AG04449 (cell line): ENCODE measurements at regions of chr7 and their contacts with region 1.

Region 1: DNA sequence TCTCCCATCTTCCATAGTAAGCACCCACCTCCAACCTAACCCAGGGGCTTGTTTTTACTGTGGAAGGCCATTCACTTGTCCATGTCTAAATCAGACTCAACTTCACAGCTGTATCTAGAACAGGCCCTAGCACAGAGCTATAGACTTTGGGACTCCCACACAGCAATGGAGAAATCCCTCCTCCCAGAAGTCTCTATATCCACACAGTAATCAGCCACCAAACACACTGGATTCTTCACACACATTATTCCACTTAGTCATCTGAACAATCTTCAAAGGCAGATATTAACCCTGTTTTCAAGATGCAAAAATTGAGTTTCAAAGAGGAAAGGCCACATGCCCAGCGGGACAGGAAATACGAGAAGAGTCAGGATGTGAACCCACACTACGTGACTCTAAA is 81.8 kb downstream of the MALSU1 start:
- DNase-seq: no peak
- H3K4me3 ChIP-seq: no peak overlapping the region
- CTCF ChIP-seq: no peak

Region 2: DNA sequence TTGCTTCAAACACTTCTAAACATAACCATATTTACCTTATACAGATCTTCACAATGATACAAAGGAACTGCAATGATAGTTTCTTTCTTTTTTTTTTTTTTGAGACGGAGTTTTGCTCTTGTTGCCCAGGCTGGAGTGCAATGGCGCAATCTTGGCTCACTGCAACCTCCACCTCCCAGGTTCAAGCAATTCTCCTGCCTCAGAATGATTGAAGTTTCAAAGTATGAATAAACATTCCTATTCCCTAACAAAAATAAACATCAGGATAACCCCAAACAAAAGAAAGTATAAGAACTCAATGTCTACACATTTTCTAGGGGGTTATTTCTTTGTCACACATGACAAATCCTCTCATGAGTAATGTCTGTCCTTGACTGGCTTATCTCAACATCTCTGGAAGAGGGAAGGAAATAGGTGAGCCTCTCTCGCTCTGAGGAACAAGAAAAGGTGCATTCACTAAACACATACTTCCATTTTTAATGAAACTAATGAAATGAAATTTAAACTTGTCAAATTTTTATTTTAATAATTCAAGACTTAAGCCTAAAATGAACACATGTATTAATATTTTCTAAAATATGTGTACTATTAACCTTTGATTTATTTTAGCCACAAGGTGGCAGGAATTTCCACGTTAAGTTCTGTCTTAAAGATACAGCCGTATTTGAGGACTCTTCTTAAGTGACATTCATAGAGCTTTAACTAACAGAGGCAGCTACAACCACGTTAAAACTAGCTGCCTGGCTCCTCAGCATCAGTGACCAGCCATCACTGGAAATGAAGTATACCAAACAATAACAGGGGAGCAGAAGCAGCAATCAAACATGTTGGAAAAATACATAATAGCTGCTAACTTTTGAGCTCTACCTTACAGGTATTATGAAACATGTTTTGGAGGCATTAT is 23.5 kb before region 1 on chr7:
- CTCF ChIA-PET with region 1: interaction called, 10 read pairs
- POLR2A ChIA-PET with region 1: no interaction called
- DNase-seq: no peak
- H3K4me3 ChIP-seq: no peak overlapping the region
- CTCF ChIP-seq: no peak

Region 3: DNA sequence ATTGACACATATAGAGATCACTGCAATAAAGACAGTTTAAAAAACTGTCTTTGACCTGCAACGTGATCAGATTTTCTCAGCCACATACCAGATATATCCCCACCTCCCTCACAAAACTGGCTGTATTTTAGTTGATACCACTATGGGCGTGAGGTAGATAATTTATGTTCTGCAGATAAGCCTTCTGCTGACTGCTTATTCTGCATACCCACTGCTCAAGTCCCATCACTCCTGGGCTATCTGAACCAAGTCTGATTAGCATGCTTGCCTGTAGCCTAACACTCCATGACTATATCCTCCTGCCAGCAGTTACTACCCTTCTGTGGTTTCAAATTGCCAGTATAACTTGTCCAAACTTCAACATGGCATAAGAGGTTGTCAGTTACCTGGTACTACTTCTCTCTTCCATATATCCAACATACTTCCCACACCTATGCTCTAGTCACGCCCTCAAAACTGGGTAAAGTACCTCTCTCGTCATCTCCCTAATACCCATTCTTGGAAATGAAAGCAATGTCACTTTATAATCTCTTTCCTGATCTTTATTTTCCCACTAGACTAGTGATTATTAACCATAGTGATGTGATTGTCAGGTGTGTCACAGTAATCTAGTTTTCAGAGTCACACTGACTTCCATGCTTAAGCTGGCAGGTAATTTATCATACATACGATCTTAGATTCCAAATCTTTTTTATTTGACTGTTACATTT is 11.1 kb before region 1 on chr7:
- CTCF ChIA-PET with region 1: no interaction called
- POLR2A ChIA-PET with region 1: no interaction called
- DNase-seq: no peak
- H3K4me3 ChIP-seq: no peak overlapping the region
- CTCF ChIP-seq: no peak